ENCODE measurements at regions of chr5 and their contacts with region 1.

Region 1: DNA sequence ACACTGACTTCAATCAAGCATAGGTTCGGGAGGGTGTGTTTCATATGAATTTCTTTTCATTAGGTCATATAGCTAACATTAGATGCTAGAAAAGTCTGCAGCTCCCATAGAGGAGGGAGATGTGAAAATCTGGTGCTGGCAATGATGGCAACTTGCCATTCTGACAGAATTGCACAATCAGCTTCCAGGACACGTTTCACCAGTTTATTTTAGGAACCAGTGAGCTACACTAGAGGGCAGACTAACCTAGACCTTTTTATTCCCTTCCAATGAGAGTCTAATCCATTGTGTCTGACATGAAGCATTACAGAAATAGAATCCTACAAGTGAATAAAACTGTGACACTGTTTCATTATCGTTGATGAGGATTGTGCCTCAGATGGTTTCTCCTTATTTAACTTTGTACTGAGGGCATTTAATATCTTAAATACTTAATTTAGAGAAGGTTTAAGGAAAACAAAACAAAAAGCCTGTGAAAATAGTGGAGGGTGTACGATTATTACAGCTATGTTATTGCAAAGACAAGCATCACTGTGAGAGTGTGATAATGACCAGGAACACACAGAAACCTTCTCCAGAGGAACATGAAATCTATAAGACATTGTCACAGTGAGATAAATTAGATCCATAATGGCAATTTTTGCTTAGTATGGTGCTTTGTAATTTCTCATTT is 363.3 kb upstream of the RPS23 start:
- DNase-seq: peak; percentile 64
- H3K4me3 ChIP-seq: no peak overlapping the region
- H3K27ac ChIP-seq: peak overlapping the region in 1 of 2 experiments; percentile 86; a peak in 3 of 4 replicates
- H3K4me1 ChIP-seq: peaks cover 0 to 15% of the 10 kb centered on the region in 2 experiments; a peak in 2 of 4 replicates
- H3K27me3 ChIP-seq: no peaks in the 10 kb centered on the region
- CTCF ChIP-seq: peak; percentile 78
- EP300 ChIP-seq: peak in 1 of 2 experiments; percentile 46; a peak in 1 of 4 replicates
- RAD21 ChIP-seq: peak; percentile 97

Region 2: GRCh38 chr5:82487131-82487530 is 154.3 kb before region 1 on chr5:
- CTCF ChIA-PET with region 1: no interaction called
- POLR2A ChIA-PET with region 1: no interaction called
- DNase-seq: no peak
- H3K4me3 ChIP-seq: no peak overlapping the region
- H3K27ac ChIP-seq: no peak overlapping the region
- H3K4me1 ChIP-seq: no peaks in the 10 kb centered on the region
- H3K27me3 ChIP-seq: no peaks in the 10 kb centered on the region
- CTCF ChIP-seq: no peak
- EP300 ChIP-seq: no peak
- RAD21 ChIP-seq: no peak

Region 3: DNA sequence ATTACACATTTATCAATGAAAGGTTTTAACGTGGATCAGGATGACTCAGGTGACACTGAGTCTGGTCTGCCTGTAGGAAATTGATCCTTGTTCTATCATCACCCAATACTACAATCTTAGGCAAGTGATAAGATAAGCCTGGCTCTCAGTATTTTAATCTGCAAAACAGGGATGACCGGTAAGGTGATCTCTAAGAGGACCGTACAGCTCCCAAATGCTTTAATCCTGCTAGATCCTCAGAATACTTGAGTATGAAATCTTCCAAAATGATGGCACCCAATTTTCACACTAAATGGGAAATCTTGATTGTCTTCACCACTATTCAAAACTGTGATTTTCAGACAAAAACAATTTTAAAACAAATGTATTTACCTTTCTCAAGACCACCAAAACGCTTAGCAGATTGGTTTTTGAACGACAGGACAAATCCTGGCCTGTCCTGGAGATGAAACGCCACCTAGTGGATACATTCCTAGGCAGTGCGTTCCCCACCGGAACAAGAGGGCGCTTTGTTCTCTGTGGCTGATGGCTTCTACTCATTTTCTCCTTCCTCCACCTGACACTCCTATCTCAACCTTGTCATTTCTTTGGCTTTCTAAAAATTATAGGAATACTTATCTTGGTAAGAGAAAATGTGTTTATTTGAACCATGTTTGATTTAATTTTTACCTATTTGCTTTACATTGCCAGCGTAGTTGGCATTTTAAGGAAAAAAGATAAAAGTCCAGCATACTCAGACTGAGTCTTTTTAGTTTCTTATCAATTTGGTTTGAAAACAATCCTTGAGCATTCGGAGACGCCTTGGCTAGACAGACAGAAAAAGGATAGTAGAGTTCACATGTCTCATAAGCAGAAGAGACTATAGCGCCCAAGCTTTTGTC is 788.9 kb after region 1 on chr5:
- CTCF ChIA-PET with region 1: interaction called, 11 read pairs
- POLR2A ChIA-PET with region 1: no interaction called
- DNase-seq: peak; percentile 55
- H3K4me3 ChIP-seq: no peak overlapping the region; a peak in 1 of 4 replicates
- H3K27ac ChIP-seq: no peak overlapping the region
- H3K4me1 ChIP-seq: no peaks in the 10 kb centered on the region; a peak in 1 of 4 replicates
- H3K27me3 ChIP-seq: no peaks in the 10 kb centered on the region
- CTCF ChIP-seq: peak; percentile 89
- EP300 ChIP-seq: no peak
- RAD21 ChIP-seq: peak; percentile 85

Region 4: DNA sequence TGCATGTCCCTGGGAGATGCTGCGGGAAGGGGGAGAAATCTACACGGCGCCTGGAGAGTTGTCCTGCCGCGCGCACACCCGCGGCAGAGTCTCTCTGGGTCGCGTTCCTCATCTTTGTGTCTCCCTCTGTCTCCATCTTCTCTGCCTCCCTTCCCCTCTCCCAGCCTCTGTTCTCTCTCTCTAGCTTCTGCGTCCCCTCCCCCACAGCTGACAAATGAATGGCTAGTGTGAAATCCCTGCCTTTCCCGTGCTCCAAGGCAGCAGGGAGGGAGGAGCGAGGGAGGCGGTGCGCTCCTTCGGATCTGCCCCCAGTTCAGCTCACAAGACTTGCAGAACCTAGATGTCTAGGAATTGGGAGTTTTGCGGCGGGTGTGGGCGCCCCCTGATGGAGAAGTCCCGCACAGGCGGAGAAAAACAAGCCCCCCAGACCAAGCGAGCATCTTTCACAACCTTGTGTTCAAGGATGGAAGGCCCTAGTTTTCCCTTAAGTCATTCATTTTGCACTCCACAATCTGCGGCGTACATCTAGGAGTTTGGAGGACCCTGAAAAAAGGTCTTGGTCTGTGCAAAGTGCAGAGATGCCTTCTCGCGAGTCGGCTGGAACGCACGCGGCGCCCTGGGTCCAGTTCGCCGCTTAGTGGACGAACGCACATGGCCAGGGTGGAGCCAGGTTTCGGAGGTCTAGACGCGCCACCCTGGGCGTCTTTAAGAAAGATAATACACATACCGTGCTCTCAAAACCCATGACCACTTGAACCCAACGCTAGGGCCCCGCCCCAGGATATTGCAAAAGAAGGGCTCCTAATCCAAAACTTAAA is 832.1 kb after region 1 on chr5:
- CTCF ChIA-PET with region 1: interaction called, 11 read pairs
- POLR2A ChIA-PET with region 1: interaction called, 5 read pairs
- DNase-seq: peak; percentile 85
- H3K4me3 ChIP-seq: peak overlapping the region; percentile 67 to 95
- H3K27ac ChIP-seq: peak overlapping the region; percentile 92 to 93
- H3K4me1 ChIP-seq: peaks cover 8% of the 10 kb centered on the region in 2 experiments; a peak in 3 of 4 replicates
- H3K27me3 ChIP-seq: no peaks in the 10 kb centered on the region
- CTCF ChIP-seq: peak; percentile 96
- EP300 ChIP-seq: peak in 1 of 2 experiments; percentile 28; a peak in 1 of 4 replicates
- RAD21 ChIP-seq: peak; percentile 86